ENCODE measurements at regions of chr9 and their contacts with region 1.

Region 1: GRCh38 chr9:34665381-34666250 is 3.2 kb upstream of the CCL27 start:
- DNase-seq: peak; percentile 93
- H3K4me3 Mint-ChIP-seq: peak overlapping the region; percentile 85
- H3K27ac Mint-ChIP-seq: peak overlapping the region; percentile 80
- H3K4me1 Mint-ChIP-seq: peaks cover 50% of the 10 kb centered on the region
- H3K27me3 Mint-ChIP-seq: no peaks in the 10 kb centered on the region

Region 2: GRCh38 chr9:34493972-34494535 is 171.6 kb before region 1 on chr9:
- CTCF ChIA-PET with region 1: no interaction called
- POLR2A ChIA-PET with region 1: no interaction called
- DNase-seq: peak; percentile 48
- H3K4me3 Mint-ChIP-seq: no peak overlapping the region
- H3K27ac Mint-ChIP-seq: no peak overlapping the region
- H3K4me1 Mint-ChIP-seq: no peaks in the 10 kb centered on the region
- H3K27me3 Mint-ChIP-seq: no peaks in the 10 kb centered on the region

Region 3: DNA sequence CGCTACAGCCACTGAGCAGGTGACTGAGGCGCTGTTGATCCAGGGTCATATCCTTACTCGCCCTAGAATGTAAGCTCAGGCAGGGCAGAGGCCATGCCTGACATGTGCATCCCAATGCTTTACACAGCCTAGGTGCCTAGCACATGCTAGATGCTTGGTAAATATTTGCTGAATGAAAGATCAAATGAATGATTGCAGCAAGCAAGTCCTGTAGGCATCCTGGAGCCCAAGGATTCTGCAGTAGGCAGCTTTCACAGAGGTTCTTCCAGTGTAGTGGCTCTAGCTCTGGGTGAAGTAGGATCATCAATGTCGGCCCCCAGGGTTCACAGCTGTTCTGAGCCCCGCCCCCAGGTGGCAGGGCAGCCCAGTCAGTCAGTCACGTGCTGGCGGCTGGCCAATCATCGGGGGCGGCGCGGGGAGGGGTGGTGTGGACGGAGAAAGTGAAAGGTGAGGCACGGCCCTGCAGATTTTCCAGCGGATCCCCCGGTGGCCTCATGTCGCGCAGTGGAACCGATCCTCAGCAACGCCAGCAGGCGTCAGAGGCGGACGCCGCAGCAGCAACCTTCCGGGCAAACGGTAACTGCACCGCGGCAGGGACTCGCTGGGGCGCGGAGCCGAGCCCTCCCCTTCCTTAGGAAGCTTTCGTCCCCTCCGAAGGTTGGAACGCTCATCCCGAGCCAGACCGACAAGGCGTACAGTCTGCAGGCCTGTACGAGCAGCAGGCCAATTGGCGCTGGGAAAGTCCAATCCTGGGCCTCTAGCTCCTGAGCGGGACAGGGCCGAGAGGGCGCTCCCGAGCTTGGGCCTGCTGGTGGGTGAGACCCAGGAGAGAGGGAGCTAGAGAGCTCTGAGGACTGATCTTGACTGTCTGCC is 19.2 kb before region 1 on chr9 and contains the start of gene GALT:
- CTCF ChIA-PET with region 1: interaction called, 125 read pairs
- POLR2A ChIA-PET with region 1: interaction called, 162 read pairs
- DNase-seq: peak; percentile 97
- H3K4me3 Mint-ChIP-seq: peak within 1 kb of the TSS; percentile 78
- H3K27ac Mint-ChIP-seq: peak within 1 kb of the TSS; percentile 76
- H3K4me1 Mint-ChIP-seq: peaks cover 36% of the 10 kb centered on the region
- H3K27me3 Mint-ChIP-seq: no peaks in the 10 kb centered on the region
- total RNA-seq, gene GALT: 95.2 to 95.6 TPM

Region 4: DNA sequence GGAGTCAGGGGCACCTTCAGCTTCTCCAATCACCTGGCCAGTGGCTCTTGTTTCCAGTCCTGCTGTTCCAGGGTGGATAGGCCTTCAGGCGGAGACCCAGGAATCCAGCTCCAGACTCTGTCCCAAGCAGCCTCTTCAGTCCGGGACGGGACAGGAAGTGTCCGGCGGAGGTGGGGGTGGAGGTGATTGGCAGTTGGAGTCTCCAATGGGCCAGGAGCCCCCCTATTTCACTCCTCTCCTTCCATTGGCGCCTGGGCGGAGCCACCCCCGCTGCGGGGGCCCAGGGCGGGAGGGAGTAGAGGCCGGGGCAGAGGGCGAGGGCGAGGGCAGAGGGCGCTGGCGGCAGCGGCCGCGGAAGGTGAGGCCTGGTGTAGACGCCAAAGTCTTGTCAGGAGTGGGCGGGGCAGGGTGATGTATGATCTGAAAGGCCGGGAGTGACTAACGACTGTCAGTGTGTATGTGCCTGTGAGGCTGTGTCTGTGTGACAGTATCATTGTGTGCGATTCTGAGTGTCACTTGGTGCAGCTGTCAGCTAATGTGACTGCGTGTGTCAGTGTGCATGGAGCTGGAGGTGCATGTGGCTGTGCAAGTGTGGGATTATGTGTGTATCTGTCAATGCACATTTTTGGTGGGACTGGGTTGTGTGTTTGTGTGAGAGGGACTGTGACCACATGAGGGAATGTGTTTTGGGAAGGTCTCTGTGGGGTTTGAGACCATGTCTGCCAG is 13.6 kb before region 1 on chr9 and contains the start of gene IL11RA:
- CTCF ChIA-PET with region 1: interaction called, 125 read pairs
- POLR2A ChIA-PET with region 1: interaction called, 162 read pairs
- DNase-seq: peak; percentile 55
- H3K4me3 Mint-ChIP-seq: peak within 1 kb of the TSS; percentile 8
- H3K27ac Mint-ChIP-seq: peak within 1 kb of the TSS; percentile 16
- H3K4me1 Mint-ChIP-seq: peaks cover 47% of the 10 kb centered on the region
- H3K27me3 Mint-ChIP-seq: no peaks in the 10 kb centered on the region
- total RNA-seq, gene IL11RA: 51.5 to 54.0 TPM

Region 5: DNA sequence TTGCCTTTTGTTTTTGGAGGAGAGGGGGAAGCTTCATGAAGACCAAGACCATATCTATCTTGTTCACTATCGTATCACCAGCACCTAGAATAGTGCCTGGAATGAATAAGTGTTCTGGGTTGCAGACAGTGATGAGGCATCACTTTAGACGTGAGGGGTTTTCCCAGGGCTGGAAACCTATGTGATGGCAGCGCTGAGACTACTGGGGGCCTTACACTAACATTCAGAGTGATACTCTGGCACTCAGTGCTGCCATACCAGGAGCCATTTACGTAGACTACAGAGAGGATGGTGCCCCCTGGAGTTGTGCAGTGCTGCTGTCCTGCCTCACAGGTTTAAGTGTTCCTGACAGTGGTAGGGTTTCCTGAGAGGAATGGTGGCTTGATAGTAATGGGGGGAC is 18.5 kb after region 1 on chr9:
- CTCF ChIA-PET with region 1: no interaction called
- POLR2A ChIA-PET with region 1: no interaction called
- DNase-seq: no peak
- H3K4me3 Mint-ChIP-seq: no peak overlapping the region
- H3K27ac Mint-ChIP-seq: no peak overlapping the region
- H3K4me1 Mint-ChIP-seq: peaks cover 10% of the 10 kb centered on the region
- H3K27me3 Mint-ChIP-seq: no peaks in the 10 kb centered on the region

Region 6: GRCh38 chr9:34701769-34702736 is 36.4 kb after region 1 on chr9:
- CTCF ChIA-PET with region 1: interaction called, 40 read pairs
- POLR2A ChIA-PET with region 1: interaction called, 5 read pairs
- DNase-seq: peak; percentile 79
- H3K4me3 Mint-ChIP-seq: peak overlapping the region; percentile 62
- H3K27ac Mint-ChIP-seq: no peak overlapping the region
- H3K4me1 Mint-ChIP-seq: peaks cover 9% of the 10 kb centered on the region
- H3K27me3 Mint-ChIP-seq: peaks cover 19% of the 10 kb centered on the region

Region 7: GRCh38 chr9:34746526-34746925 is 80.9 kb after region 1 on chr9:
- CTCF ChIA-PET with region 1: no interaction called
- POLR2A ChIA-PET with region 1: no interaction called
- DNase-seq: no peak
- H3K4me3 Mint-ChIP-seq: no peak overlapping the region
- H3K27ac Mint-ChIP-seq: no peak overlapping the region
- H3K4me1 Mint-ChIP-seq: no peaks in the 10 kb centered on the region
- H3K27me3 Mint-ChIP-seq: peaks cover 28% of the 10 kb centered on the region

Measured in activated CD4-positive, alpha-beta memory T cell treated with anti-CD3 and anti-CD28 coated beads, Interleukin-2, amount 10 ng/mL, durations not matched to agents 7 days and 5 days (primary cell).